ENCODE measurements at regions of chr18 and their contacts with region 1.

Region 1: GRCh38 chr18:56085551-56085950 is 497.6 kb upstream of the TCF4 start:
- DNase-seq: peak; percentile 47
- H3K4me3 ChIP-seq: no peak overlapping the region
- CTCF ChIP-seq: no peak

Region 2: DNA sequence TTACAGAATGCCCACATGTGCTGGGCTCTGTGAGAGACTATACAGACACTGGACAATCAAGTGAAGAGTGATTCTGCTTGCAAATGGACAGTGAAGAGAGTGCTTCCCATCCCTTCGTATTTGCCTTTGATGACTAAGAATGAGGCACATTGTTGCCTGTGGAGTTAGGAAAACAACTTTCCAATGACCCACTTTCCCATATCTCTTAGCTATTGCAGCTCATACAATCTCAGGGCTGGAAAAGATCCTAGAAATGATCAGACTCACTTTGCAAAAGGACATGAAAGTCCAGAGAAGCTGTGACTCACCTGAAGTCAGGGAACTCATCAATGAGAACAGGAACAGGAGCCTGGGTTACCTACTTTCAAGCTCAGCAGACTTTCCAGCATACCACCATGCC is 57.0 kb before region 1 on chr18:
- CTCF ChIA-PET with region 1: no interaction called
- POLR2A ChIA-PET with region 1: no interaction called
- DNase-seq: peak; percentile 12
- H3K4me3 ChIP-seq: no peak overlapping the region
- CTCF ChIP-seq: no peak

Region 3: DNA sequence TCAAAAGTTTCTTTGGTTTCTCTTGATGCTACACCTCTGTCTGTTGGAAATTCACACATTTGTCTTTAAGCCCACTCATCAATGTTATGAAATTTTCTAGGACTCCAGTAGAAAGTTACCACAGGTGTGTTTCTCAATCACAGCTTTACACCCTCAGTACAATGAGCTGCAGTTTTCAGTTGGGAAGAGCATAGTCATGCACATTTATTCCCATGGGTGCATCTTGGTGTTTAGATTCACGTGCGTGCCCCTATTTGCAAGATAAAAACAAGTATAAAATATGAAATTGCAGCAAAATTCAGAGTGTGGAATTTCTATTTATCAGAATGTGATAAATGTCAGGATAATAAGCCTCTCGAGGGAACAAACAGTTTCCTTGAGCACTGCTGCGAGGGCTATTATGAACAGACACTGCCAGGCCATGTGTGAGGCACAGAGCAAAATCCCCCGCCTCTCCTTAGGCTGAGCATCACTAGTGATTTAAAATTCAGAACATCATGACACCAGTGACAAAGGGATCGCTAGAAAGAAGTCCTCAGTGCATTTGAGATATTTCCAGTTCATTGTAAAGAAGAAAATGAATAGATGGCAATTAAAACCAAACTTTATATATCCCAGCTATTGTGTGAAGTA is 14.7 kb after region 1 on chr18:
- CTCF ChIA-PET with region 1: interaction called, 12 read pairs
- POLR2A ChIA-PET with region 1: no interaction called
- DNase-seq: no peak
- H3K4me3 ChIP-seq: no peak overlapping the region
- CTCF ChIP-seq: no peak

Measured in AG04449 (cell line).